Activated CD4-positive, alpha-beta memory T cell treated with anti-CD3 and anti-CD28 coated beads for 36 hours (primary cell): ENCODE measurements at regions of chrX and their contacts with region 1.

Region 1: DNA sequence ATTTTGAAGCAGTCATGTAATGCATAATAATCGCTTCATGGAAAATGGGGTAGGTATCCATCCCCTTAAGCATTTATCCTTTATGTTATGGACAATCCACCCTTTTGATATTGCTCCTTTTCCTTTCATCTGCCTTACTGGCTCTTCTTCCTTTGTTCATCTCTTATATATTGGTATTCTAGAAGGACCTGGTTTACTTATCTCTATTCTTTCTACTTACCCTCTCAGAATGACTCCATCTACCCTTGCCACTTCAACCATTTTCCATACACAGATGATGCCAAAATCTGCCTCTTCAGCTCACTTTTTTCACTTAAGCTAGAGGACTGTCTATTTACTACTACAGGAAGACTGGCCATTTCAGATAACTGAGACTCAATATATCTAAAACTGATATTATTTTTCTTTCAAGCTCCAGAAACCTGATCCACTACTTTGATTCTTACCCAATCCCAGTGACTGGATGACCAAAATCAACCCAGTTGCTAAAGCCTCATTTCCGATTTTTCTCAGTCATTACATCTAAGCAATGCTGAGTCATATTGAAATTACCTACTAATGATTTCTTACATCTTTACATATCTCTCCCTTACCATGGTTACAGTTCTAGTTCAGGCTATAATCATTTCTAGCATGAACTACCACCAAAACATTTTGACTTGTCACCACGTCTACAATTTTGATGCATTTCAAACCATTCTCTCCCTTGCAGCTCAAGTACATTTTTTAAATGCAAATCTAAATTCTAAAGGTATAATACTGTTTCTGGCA is 93.7 kb downstream of the FAAH2 start:
- DNase-seq: no peak
- H3K4me3 Mint-ChIP-seq: peak overlapping the region; percentile 20
- H3K27ac Mint-ChIP-seq: peak overlapping the region; percentile 87
- H3K4me1 Mint-ChIP-seq: peaks cover 17% of the 10 kb centered on the region
- H3K27me3 Mint-ChIP-seq: no peaks in the 10 kb centered on the region

Region 2: GRCh38 chrX:57364145-57364544 is 16.1 kb before region 1 on chrX:
- CTCF ChIA-PET with region 1: no interaction called
- POLR2A ChIA-PET with region 1: interaction called, 4 read pairs
- intact Hi-C with region 1: loop called (anchors 1 kb)
- DNase-seq: no peak
- H3K4me3 Mint-ChIP-seq: no peak overlapping the region
- H3K27ac Mint-ChIP-seq: peak overlapping the region; percentile 36
- H3K4me1 Mint-ChIP-seq: peaks cover 17% of the 10 kb centered on the region
- H3K27me3 Mint-ChIP-seq: no peaks in the 10 kb centered on the region

Region 3: DNA sequence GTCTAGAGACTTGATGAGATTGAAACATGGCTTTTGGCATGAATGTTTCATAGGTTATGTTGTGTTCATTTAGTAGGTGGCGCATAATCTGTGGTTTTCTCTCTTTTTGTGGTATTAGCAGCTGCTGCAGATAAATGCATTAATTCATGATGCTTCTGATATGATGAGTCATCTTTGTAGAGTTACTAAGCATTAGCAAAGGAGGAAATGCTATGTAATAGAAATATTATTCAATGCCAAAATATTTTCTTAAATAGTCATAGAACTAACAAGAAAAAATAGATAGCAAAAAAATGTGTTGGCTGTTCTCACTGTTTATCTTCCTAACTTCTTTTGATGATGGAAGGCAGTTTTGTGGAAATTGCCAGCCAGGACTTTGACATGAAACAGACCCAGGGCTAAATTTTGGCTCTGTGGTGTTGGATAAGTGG is 215.2 kb after region 1 on chrX:
- CTCF ChIA-PET with region 1: no interaction called
- POLR2A ChIA-PET with region 1: no interaction called
- intact Hi-C with region 1: loop called (anchors 5 kb)
- DNase-seq: no peak
- H3K4me3 Mint-ChIP-seq: peak overlapping the region; percentile 72
- H3K27ac Mint-ChIP-seq: peak overlapping the region; percentile 71
- H3K4me1 Mint-ChIP-seq: peaks cover 35% of the 10 kb centered on the region
- H3K27me3 Mint-ChIP-seq: no peaks in the 10 kb centered on the region